ENCODE measurements at regions of chr2 and their contacts with region 1.

Region 1: GRCh38 chr2:173965329-173966025 is at the start of gene SP3:
- DNase-seq: peak; percentile 97
- H3K4me3 Mint-ChIP-seq: peak within 1 kb of the TSS; percentile 87
- H3K27ac Mint-ChIP-seq: peak within 1 kb of the TSS; percentile 87
- H3K4me1 Mint-ChIP-seq: peaks cover 12% of the 10 kb centered on the region
- H3K27me3 Mint-ChIP-seq: no peaks in the 10 kb centered on the region
- CTCF ChIP-seq: no peak
- total RNA-seq, gene SP3: 62.1 and 73.8 TPM in 2 replicates

Region 2: GRCh38 chr2:173749315-173749714 is 216.2 kb before region 1 on chr2:
- CTCF ChIA-PET with region 1: no interaction called
- POLR2A ChIA-PET with region 1: no interaction called
- intact Hi-C with region 1: loop called (anchors 5 kb)
- DNase-seq: peak; percentile 44
- H3K4me3 Mint-ChIP-seq: no peak overlapping the region
- H3K27ac Mint-ChIP-seq: no peak overlapping the region
- H3K4me1 Mint-ChIP-seq: no peaks in the 10 kb centered on the region
- H3K27me3 Mint-ChIP-seq: no peaks in the 10 kb centered on the region
- CTCF ChIP-seq: peak; percentile 45

Region 3: GRCh38 chr2:173982918-173983317 is 17.4 kb after region 1 on chr2:
- CTCF ChIA-PET with region 1: no interaction called
- POLR2A ChIA-PET with region 1: interaction called, 44 read pairs
- intact Hi-C with region 1: no loop called
- DNase-seq: peak; percentile 94
- H3K4me3 Mint-ChIP-seq: no peak overlapping the region
- H3K27ac Mint-ChIP-seq: peak overlapping the region; percentile 79
- H3K4me1 Mint-ChIP-seq: peaks cover 52% of the 10 kb centered on the region
- H3K27me3 Mint-ChIP-seq: no peaks in the 10 kb centered on the region
- CTCF ChIP-seq: no peak

Region 4: GRCh38 chr2:173990970-173991819 is 25.7 kb after region 1 on chr2:
- CTCF ChIA-PET with region 1: interaction called, 3 read pairs
- POLR2A ChIA-PET with region 1: interaction called, 44 read pairs
- intact Hi-C with region 1: no loop called
- DNase-seq: peak; percentile 75
- H3K4me3 Mint-ChIP-seq: peak overlapping the region; percentile 43
- H3K27ac Mint-ChIP-seq: peak overlapping the region; percentile 77
- H3K4me1 Mint-ChIP-seq: peaks cover 30% of the 10 kb centered on the region
- H3K27me3 Mint-ChIP-seq: no peaks in the 10 kb centered on the region
- CTCF ChIP-seq: no peak

Region 5: DNA sequence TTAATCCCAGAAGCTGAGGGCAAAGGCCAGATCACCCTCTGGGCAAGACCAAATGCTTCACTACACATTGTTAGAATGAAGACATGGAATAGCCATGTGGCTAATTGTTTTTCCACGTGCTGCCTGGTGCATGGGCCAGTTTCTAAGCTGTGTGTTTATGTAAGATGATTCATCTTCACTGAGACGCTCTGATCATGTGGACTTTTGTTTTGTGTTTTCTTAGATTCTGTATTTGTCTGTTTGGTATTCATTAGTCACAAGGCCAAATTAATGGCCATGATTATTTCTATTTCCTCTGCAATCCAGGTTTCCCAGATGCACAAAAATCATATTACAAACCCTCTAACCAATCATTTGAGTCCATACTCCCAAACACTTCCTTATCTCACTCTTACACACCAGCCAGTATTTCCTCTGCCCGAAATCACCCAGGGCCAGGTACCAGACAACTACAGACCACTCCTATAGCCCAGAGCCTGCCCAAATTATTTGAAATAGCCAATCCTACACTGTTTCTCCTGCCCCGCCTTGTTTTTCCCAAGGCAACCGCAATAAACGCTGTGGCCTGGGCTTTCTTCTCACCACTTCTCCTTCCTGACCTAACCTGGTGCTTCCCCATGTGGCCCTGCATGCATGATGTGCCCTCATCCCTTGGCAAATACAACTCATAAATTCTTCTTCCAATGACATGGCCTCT is 93.8 kb after region 1 on chr2:
- CTCF ChIA-PET with region 1: no interaction called
- POLR2A ChIA-PET with region 1: interaction called, 15 read pairs
- intact Hi-C with region 1: no loop called
- DNase-seq: peak; percentile 58
- H3K4me3 Mint-ChIP-seq: no peak overlapping the region
- H3K27ac Mint-ChIP-seq: peak overlapping the region; percentile 92
- H3K4me1 Mint-ChIP-seq: peaks cover 34% of the 10 kb centered on the region
- H3K27me3 Mint-ChIP-seq: no peaks in the 10 kb centered on the region
- CTCF ChIP-seq: no peak

Region 6: DNA sequence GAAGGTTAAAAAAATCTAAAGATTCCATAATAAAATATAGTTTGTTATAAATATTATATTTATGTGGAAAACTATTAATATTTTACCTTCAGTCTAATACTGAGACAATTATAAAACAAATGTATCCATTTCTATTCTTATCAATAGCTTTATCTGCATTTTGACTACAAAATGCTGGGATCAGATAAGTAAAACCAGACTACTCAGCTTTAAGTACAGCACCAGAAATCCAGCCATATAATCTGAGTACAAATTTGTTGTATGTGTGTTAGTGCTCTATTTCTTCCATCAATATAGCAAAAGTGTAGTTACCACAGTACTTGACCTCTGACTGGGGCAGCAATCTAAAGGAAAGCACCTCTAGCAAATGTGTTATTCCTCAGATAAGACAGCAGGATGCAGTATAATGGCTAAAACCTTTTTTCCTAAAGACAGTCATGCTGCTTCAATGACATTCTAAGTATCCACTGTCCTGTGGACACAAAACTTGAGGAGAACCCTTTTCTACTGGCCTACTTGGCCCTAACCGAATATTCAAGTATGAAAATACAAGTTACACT is 214.8 kb after region 1 on chr2:
- CTCF ChIA-PET with region 1: no interaction called
- POLR2A ChIA-PET with region 1: no interaction called
- intact Hi-C with region 1: no loop called
- DNase-seq: peak; percentile 20
- H3K4me3 Mint-ChIP-seq: no peak overlapping the region
- H3K27ac Mint-ChIP-seq: peak overlapping the region; percentile 74
- H3K4me1 Mint-ChIP-seq: peaks cover 21% of the 10 kb centered on the region
- H3K27me3 Mint-ChIP-seq: no peaks in the 10 kb centered on the region
- CTCF ChIP-seq: no peak

Region 7: DNA sequence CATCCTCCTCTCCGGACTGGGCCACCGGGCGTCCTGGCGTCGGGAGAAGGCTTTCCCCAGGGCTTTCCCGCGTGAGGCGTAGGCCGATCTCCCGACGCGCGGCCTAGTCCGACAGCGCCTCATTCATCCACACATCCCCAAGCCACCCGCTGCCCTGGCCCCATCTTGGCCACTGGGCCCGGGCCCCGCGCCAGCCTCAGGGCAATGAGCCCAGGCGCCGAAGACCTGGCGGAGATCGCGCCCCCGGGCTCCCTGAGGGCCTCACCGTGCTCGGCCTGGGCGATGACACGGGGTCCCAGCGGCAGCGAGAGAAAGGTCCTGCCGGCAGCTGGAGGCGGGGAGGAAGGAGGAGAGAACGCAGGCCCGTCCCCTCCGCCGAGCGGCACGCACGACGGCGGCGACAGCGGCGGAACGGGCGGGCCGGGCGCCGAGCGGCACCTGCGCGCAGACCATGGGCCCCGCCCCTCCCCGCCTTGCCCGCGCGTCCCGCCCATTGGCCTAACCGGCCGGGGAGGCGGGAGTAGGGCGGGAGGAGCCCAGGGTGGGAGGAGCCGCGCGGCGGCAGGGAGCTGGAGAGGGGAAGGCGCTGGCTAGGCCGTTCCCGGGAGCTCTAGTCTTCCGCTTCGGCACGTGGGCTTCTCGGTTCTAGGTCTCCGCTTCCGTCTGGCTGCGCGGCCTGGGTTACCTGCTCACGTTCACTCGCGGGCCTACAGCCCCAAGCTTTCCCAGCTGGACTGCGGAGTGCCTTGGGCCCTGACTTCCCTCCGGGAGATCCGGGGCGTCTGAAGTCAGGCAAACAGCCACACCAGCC is 282.9 kb after region 1 on chr2 and contains the start of gene OLA1:
- CTCF ChIA-PET with region 1: interaction called, 3 read pairs
- POLR2A ChIA-PET with region 1: interaction called, 4 read pairs
- intact Hi-C with region 1: loop called (anchors 10 kb)
- DNase-seq: peak; percentile 96
- H3K4me3 Mint-ChIP-seq: peak within 1 kb of the TSS; percentile 94
- H3K27ac Mint-ChIP-seq: peak within 1 kb of the TSS; percentile 94
- H3K4me1 Mint-ChIP-seq: peaks cover 13% of the 10 kb centered on the region
- H3K27me3 Mint-ChIP-seq: no peaks in the 10 kb centered on the region
- CTCF ChIP-seq: no peak
- total RNA-seq, gene OLA1: 169 and 224 TPM in 2 replicates

Measured in MCF 10A (cell line).